Mammary epithelial cell (primary cell): ENCODE measurements at regions of chrX and their contacts with region 1.

Region 1: GRCh38 chrX:15524417-15524816 is 23.8 kb downstream of the BMX start:
- DNase-seq: peak; percentile 39
- H3K4me3 ChIP-seq: no peak overlapping the region
- H3K27ac ChIP-seq: no peak overlapping the region
- H3K4me1 ChIP-seq: peaks cover 19% of the 10 kb centered on the region
- H3K27me3 ChIP-seq: no peaks in the 10 kb centered on the region
- CTCF ChIP-seq: no peak

Region 2: DNA sequence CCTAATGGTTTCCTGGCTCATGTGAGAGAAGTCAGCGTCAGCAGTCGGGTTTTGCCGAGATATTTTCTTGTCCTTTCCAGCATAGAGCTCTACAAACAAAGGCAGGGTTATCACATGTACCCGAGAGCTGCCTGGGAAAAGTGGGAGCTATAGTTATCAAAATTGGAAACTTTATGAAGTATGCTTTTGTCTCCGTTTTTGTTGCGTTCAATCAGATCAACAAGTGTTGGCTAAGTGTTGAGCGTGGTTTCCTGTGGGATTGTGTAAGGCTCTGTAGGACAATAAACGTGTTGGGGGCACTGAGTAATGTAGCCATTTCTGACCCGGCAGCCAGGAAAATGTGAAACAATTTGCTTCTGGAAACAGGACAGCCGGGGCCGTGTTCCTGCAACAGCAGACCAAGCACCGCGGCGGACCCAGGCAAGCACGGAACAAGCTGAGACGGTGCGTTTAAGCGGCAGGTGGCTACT is 23.9 kb before region 1 on chrX and contains the start of gene BMX:
- CTCF ChIA-PET with region 1: interaction called, 17 read pairs
- dilution Hi-C with region 1: no loop called
- in situ Hi-C with region 1: no loop called
- intact Hi-C with region 1: no loop called
- DNase-seq: no peak
- H3K4me3 ChIP-seq: no peak within 1 kb of the TSS
- H3K27ac ChIP-seq: no peak within 1 kb of the TSS
- H3K4me1 ChIP-seq: peaks cover 40% of the 10 kb centered on the region
- H3K27me3 ChIP-seq: no peaks in the 10 kb centered on the region
- CTCF ChIP-seq: no peak
- total RNA-seq, gene BMX: 0.33 to 0.49 TPM

Region 3: DNA sequence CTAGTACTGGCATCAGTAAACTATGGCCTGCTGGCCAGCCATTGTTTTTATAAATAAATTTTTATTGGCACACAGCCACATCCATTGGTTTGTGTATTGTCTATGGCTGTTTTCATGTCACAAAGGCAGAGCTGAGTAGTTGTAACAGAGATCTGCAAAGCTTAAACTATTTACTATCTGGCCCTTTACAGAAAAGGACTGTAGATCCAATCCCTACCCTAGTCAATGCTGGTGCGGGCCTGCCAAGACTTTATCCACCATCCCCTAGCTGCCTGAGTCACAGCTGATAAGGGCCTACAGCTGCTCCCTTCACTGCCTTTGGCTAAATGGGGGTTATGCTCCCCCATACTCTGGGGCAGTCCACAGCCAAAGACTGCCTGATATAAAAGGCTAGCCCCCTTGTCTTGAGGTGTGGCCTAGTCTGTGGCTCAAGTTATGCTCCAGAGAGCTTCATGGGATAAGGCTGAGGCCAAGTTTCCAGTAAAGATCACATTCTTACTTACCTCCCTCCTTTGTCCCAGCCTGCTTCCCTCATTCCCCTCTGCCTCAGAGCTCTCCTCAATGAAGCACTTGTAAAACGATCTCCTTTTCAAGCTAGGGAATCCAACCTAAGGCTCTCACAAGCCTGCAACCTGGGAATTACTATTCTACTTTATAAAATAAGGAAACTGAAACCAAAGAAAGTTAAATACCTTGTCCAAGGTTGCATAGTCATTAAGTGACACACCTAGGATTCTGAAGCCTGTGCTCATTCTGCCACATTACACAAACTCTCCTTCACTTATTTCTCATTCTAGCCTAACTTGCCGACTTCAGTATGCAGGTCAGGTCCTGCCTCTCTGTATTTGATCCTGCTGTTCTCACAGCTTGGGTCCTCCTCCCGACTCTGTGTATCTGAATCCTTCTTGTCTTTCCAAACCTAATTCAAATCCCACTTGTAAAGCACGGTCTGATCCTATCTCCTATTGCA is 55.6 kb after region 1 on chrX:
- CTCF ChIA-PET with region 1: no interaction called
- dilution Hi-C with region 1: no loop called
- in situ Hi-C with region 1: no loop called
- intact Hi-C with region 1: no loop called
- DNase-seq: peak; percentile 44
- H3K4me3 ChIP-seq: no peak overlapping the region
- H3K27ac ChIP-seq: no peak overlapping the region
- H3K4me1 ChIP-seq: no peaks in the 10 kb centered on the region
- H3K27me3 ChIP-seq: no peaks in the 10 kb centered on the region
- CTCF ChIP-seq: no peak